RWPE1 (cell line): ENCODE measurements at regions of chr2 and their contacts with region 1.

Region 1: GRCh38 chr2:68709421-68709911 is 25.1 kb upstream of the ARHGAP25 start:
- DNase-seq: peak; percentile 51
- H3K27ac ChIP-seq: no peak overlapping the region
- CTCF ChIP-seq: peak; percentile 63

Region 2: GRCh38 chr2:68722712-68723111 is 13.2 kb after region 1 on chr2:
- CTCF ChIA-PET with region 1: no interaction called
- POLR2A ChIA-PET with region 1: no interaction called
- DNase-seq: no peak
- H3K27ac ChIP-seq: no peak overlapping the region
- CTCF ChIP-seq: no peak

Region 3: GRCh38 chr2:68909793-68910674 is 200.6 kb after region 1 on chr2:
- CTCF ChIA-PET with region 1: interaction called, 11 read pairs
- POLR2A ChIA-PET with region 1: no interaction called
- DNase-seq: peak; percentile 65
- H3K27ac ChIP-seq: no peak overlapping the region
- CTCF ChIP-seq: peak; percentile 92

Region 4: GRCh38 chr2:68925295-68925896 is 215.9 kb after region 1 on chr2:
- CTCF ChIA-PET with region 1: interaction called, 37 read pairs
- POLR2A ChIA-PET with region 1: no interaction called
- DNase-seq: peak; percentile 78
- H3K27ac ChIP-seq: no peak overlapping the region
- CTCF ChIP-seq: peak; percentile 98